ENCODE measurements at regions of chr9 and their contacts with region 1.

Region 1: DNA sequence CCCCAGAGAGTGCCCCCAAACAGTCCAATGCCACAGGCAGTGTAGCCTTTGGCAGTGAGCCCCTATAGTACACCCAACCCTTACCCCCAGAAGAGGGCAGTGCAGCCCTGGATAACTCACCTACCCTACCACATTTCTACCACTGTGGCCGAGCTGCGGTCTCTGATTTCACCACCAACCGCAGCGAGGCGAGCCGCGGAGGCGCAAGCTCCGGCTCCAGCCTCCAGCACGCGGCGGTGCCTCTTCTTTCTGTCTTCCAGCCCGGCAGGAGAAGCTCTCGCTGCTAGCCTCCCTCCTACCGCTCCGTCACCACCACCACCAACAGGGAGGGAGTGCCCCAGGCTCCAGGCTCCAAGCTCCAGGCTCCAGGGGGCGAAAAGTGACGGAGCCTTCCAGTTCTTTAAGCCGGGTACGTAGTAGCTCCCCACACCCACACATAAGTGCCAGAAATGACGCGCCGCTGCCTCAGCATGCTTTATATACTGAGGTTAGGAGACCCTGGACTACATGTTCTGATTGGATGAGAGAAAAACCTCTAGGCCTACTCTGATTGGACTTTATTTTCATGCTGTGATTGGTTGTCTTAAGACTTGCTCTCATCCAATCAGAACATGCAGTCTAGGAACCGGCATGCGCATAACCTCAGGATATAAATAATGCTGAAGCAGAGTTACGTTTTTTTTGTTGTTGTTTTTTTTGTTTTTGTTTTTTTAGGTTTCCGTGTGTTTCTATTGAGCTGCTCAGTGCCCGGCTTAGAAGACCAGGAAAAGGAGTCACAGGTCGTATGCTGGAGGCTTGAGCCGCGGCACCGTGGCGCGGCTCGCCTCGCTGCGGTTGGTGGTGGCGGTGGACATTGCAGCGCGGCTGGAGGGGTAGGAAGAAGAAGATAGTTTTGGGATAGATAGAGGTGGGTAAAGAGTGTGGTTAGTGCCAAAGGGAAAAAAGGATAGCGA is at the start of gene PCAT7:
- DNase-seq: peak; percentile 74
- H3K4me3 Mint-ChIP-seq: no peak within 1 kb of the TSS
- H3K27ac Mint-ChIP-seq: no peak within 1 kb of the TSS
- H3K4me1 Mint-ChIP-seq: peaks cover 11% of the 10 kb centered on the region
- H3K27me3 Mint-ChIP-seq: peaks cover 8% of the 10 kb centered on the region
- CTCF ChIP-seq: peak; percentile 41
- total RNA-seq, gene PCAT7: 2.0 and 2.1 TPM in 2 replicates

Region 2: GRCh38 chr9:94108584-94108983 is 446.1 kb before region 1 on chr9:
- CTCF ChIA-PET with region 1: no interaction called
- intact Hi-C with region 1: no loop called
- DNase-seq: no peak
- H3K4me3 Mint-ChIP-seq: no peak overlapping the region
- H3K27ac Mint-ChIP-seq: no peak overlapping the region
- H3K4me1 Mint-ChIP-seq: no peaks in the 10 kb centered on the region
- H3K27me3 Mint-ChIP-seq: no peaks in the 10 kb centered on the region
- CTCF ChIP-seq: no peak

Region 3: GRCh38 chr9:94603259-94604160 is 48.8 kb after region 1 on chr9:
- CTCF ChIA-PET with region 1: interaction called, 4 read pairs
- intact Hi-C with region 1: loop called (anchors 1 kb)
- DNase-seq: peak; percentile 74
- H3K4me3 Mint-ChIP-seq: no peak overlapping the region
- H3K27ac Mint-ChIP-seq: no peak overlapping the region
- H3K4me1 Mint-ChIP-seq: peaks cover 14% of the 10 kb centered on the region
- H3K27me3 Mint-ChIP-seq: no peaks in the 10 kb centered on the region
- CTCF ChIP-seq: peak; percentile 45

Region 4: GRCh38 chr9:94623253-94623652 is 68.5 kb after region 1 on chr9:
- CTCF ChIA-PET with region 1: interaction called, 7 read pairs
- intact Hi-C with region 1: loop called (anchors 1 kb)
- DNase-seq: peak; percentile 56
- H3K4me3 Mint-ChIP-seq: no peak overlapping the region
- H3K27ac Mint-ChIP-seq: no peak overlapping the region
- H3K4me1 Mint-ChIP-seq: no peaks in the 10 kb centered on the region
- H3K27me3 Mint-ChIP-seq: no peaks in the 10 kb centered on the region
- CTCF ChIP-seq: peak; percentile 29